B cell (primary cell): ENCODE measurements at regions of chr2 and their contacts with region 1.

Region 1: GRCh38 chr2:226906163-226906693 is 70.4 kb downstream of the RHBDD1 start:
- DNase-seq: peak; percentile 87
- ATAC-seq: peak; percentile 81
- H3K4me3 ChIP-seq: peak overlapping the region; percentile 36 to 60 (median 53)
- H3K4me3 Mint-ChIP-seq: peak overlapping the region; percentile 77
- H3K27ac ChIP-seq: peak overlapping the region; percentile 97 to 99
- H3K27ac Mint-ChIP-seq: peak overlapping the region; percentile 96
- H3K4me1 ChIP-seq: peaks cover 83 to 91% of the 10 kb centered on the region in 2 donors
- H3K4me1 Mint-ChIP-seq: peaks cover 90% of the 10 kb centered on the region
- H3K27me3 ChIP-seq: no peaks in the 10 kb centered on the region
- H3K27me3 Mint-ChIP-seq: no peaks in the 10 kb centered on the region
- CTCF ChIP-seq: no peak

Region 2: GRCh38 chr2:226835796-226836547 is 70.3 kb before region 1 on chr2 and contains the start of gene RHBDD1:
- CTCF ChIA-PET with region 1: interaction called, 8 read pairs
- POLR2A ChIA-PET with region 1: interaction called, 16 read pairs
- intact Hi-C with region 1: loop called (anchors 1 kb)
- DNase-seq: peak; percentile 98
- ATAC-seq: peak; percentile 84
- H3K4me3 ChIP-seq: peak within 1 kb of the TSS; percentile 63 to 89 (median 81)
- H3K4me3 Mint-ChIP-seq: peak within 1 kb of the TSS; percentile 98
- H3K27ac ChIP-seq: peak within 1 kb of the TSS; percentile 95 to 99
- H3K27ac Mint-ChIP-seq: peak within 1 kb of the TSS; percentile 100
- H3K4me1 ChIP-seq: peaks cover 46 to 50% of the 10 kb centered on the region in 2 donors
- H3K4me1 Mint-ChIP-seq: peaks cover 52% of the 10 kb centered on the region
- H3K27me3 ChIP-seq: no peaks in the 10 kb centered on the region
- H3K27me3 Mint-ChIP-seq: no peaks in the 10 kb centered on the region
- CTCF ChIP-seq: no peak
- total RNA-seq, gene RHBDD1: 128 and 142 TPM in 2 replicates

Region 3: DNA sequence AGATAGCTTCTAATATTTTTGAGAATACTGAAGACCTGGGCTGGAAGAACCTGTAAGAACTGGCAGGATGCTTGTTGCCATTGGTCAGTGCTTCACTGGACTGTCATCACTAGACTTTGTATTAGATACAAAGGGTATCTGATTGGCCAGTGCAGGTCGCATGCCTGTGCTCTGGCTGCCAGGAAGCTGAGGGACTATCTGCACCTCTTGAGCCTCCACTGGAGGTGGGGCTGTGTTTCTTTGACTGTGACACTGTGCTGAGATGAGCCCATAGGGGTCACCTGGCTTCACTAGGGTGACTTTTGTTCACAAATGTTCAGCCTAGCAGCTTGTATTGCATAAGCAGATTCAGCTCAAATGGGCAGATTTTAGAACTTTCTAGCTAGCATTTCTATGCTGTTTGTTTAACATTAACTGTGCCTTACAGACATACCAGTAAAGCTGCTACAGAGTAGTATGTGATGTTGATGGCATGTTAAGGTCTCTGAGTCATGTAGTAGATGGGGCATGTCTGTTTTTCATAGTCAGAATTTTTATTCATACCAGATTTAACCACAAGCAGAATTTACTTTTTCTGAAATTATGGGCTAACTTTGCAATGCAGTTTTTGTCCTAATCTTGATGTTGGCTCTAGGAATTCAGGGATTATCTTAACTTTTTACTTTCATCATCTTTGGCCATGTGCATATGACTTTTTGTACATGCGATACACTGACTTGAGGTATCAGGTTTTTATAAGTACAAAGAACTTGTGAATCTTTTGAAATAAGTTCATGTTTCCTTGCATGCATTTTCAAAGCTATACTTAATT is 14.2 kb before region 1 on chr2:
- CTCF ChIA-PET with region 1: interaction called, 14 read pairs
- POLR2A ChIA-PET with region 1: no interaction called
- intact Hi-C with region 1: no loop called
- DNase-seq: no peak
- ATAC-seq: peak; percentile 45
- H3K4me3 ChIP-seq: no peak overlapping the region
- H3K4me3 Mint-ChIP-seq: no peak overlapping the region
- H3K27ac ChIP-seq: no peak overlapping the region
- H3K27ac Mint-ChIP-seq: peak overlapping the region; percentile 37
- H3K4me1 ChIP-seq: peaks cover 0 to 5% of the 10 kb centered on the region in 2 donors
- H3K4me1 Mint-ChIP-seq: peaks cover 27% of the 10 kb centered on the region
- H3K27me3 ChIP-seq: no peaks in the 10 kb centered on the region
- H3K27me3 Mint-ChIP-seq: no peaks in the 10 kb centered on the region
- CTCF ChIP-seq: no peak

Region 4: GRCh38 chr2:226916669-226917068 is 10.4 kb after region 1 on chr2:
- CTCF ChIA-PET with region 1: no interaction called
- POLR2A ChIA-PET with region 1: interaction called, 5 read pairs
- intact Hi-C with region 1: loop called (anchors 1 kb)
- DNase-seq: peak; percentile 16
- ATAC-seq: peak; percentile 49
- H3K4me3 ChIP-seq: no peak overlapping the region
- H3K4me3 Mint-ChIP-seq: peak overlapping the region; percentile 53
- H3K27ac ChIP-seq: peak overlapping the region; percentile 37 to 68
- H3K27ac Mint-ChIP-seq: peak overlapping the region; percentile 82
- H3K4me1 ChIP-seq: peaks cover 10 to 12% of the 10 kb centered on the region in 2 donors
- H3K4me1 Mint-ChIP-seq: peaks cover 61% of the 10 kb centered on the region
- H3K27me3 ChIP-seq: no peaks in the 10 kb centered on the region
- H3K27me3 Mint-ChIP-seq: no peaks in the 10 kb centered on the region
- CTCF ChIP-seq: no peak

Region 5: GRCh38 chr2:226971084-226971483 is 64.9 kb after region 1 on chr2:
- CTCF ChIA-PET with region 1: interaction called, 4 read pairs
- POLR2A ChIA-PET with region 1: no interaction called
- intact Hi-C with region 1: loop called (anchors 1 kb)
- DNase-seq: peak; percentile 65
- ATAC-seq: peak; percentile 64
- H3K4me3 ChIP-seq: peak overlapping the region in 3 of 5 experiments; percentile 7 to 66 (median 41)
- H3K4me3 Mint-ChIP-seq: peak overlapping the region; percentile 88
- H3K27ac ChIP-seq: peak overlapping the region; percentile 79 to 92
- H3K27ac Mint-ChIP-seq: peak overlapping the region; percentile 99
- H3K4me1 ChIP-seq: peaks cover 27 to 31% of the 10 kb centered on the region in 2 donors
- H3K4me1 Mint-ChIP-seq: peaks cover 44% of the 10 kb centered on the region
- H3K27me3 ChIP-seq: no peaks in the 10 kb centered on the region
- H3K27me3 Mint-ChIP-seq: no peaks in the 10 kb centered on the region
- CTCF ChIP-seq: no peak